ENCODE measurements at regions of chr3 and their contacts with region 1.

Region 1: GRCh38 chr3:63818281-63819150 is 583 bp upstream of the C3orf49 start:
- DNase-seq: peak; percentile 23 to 83
- H3K4me3 ChIP-seq: no peak overlapping the region
- H3K27ac ChIP-seq: no peak overlapping the region
- H3K4me1 ChIP-seq: peaks cover 0 to 8% (median 3%) of the 10 kb centered on the region in 4 experiments; a peak in 2 of 7 replicates
- H3K27me3 ChIP-seq: no peaks in the 10 kb centered on the region
- CTCF ChIP-seq: peak; percentile 51 to 85 (median 72)
- EP300 ChIP-seq: no peak
- POLR2A ChIP-seq: no peak
- RAD21 ChIP-seq: peak; percentile 95

Region 2: GRCh38 chr3:63364910-63365431 is 453.5 kb before region 1 on chr3:
- CTCF ChIA-PET with region 1: interaction called, 18 read pairs
- POLR2A ChIA-PET with region 1: no interaction called
- DNase-seq: no peak
- H3K4me3 ChIP-seq: no peak overlapping the region
- H3K27ac ChIP-seq: no peak overlapping the region
- H3K4me1 ChIP-seq: no peaks in the 10 kb centered on the region
- H3K27me3 ChIP-seq: no peaks in the 10 kb centered on the region
- CTCF ChIP-seq: peak; percentile 31 to 84 (median 70)
- EP300 ChIP-seq: no peak
- POLR2A ChIP-seq: no peak
- RAD21 ChIP-seq: peak; percentile 72 to 81

Region 3: GRCh38 chr3:63832395-63832794 is 13.9 kb after region 1 on chr3:
- CTCF ChIA-PET with region 1: interaction called, 12 read pairs
- POLR2A ChIA-PET with region 1: interaction called, 8 read pairs
- DNase-seq: no peak
- H3K4me3 ChIP-seq: no peak overlapping the region
- H3K27ac ChIP-seq: no peak overlapping the region
- H3K4me1 ChIP-seq: no peaks in the 10 kb centered on the region
- H3K27me3 ChIP-seq: no peaks in the 10 kb centered on the region
- CTCF ChIP-seq: no peak
- EP300 ChIP-seq: no peak
- POLR2A ChIP-seq: no peak
- RAD21 ChIP-seq: no peak